ENCODE measurements at regions of chr10 and their contacts with region 1.

Region 1: DNA sequence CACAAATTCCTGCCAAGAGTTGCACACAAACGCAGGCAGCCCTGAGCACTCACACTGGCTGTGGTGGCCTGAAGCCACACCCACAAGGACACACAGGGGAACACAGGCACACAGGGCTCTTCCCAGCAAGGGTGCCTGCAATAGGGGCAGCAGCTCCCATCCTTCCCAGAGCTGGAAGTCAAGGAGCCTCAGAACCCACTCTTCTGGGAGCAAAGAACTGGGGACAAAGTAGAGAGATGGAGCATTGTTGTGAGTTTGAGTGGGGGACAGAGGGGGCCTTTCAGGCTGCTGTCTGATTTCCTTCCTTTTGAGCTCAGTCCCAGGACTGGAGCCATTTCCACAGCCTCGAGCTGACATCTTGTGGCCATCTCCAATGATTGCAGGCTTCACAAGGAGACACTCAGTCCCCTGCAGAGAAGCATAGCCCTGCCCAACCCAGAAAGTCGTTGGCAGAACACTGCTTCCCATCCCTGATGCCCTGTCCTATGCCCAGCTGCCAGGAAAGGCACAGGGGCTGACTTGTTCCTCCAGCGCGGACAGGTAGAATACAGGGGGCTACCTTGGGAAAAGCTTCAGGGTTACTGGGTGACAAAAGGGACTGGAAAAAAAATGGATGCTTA is 34.4 kb upstream of the SLF2 start:
- DNase-seq: no peak
- H3K4me3 ChIP-seq: no peak overlapping the region
- H3K27ac ChIP-seq: no peak overlapping the region
- H3K4me1 ChIP-seq: peaks cover 0 to 38% (median 14%) of the 10 kb centered on the region in 6 donors
- H3K27me3 ChIP-seq: peaks cover 0 to 30% (median 2%) of the 10 kb centered on the region in 7 donors
- CTCF ChIP-seq: peak; percentile 41 to 76 (median 58)
- POLR2A ChIP-seq: no peak

Region 2: GRCh38 chr10:99966306-99966705 is 912.1 kb before region 1 on chr10:
- intact Hi-C with region 1: no loop called
- DNase-seq: no peak
- H3K4me3 ChIP-seq: no peak overlapping the region
- H3K27ac ChIP-seq: peak overlapping the region in 1 of 8 donors; percentile 2
- H3K4me1 ChIP-seq: peaks cover 0 to 16% (median 4%) of the 10 kb centered on the region in 6 donors
- H3K27me3 ChIP-seq: no peaks in the 10 kb centered on the region
- CTCF ChIP-seq: no peak
- POLR2A ChIP-seq: no peak

Region 3: DNA sequence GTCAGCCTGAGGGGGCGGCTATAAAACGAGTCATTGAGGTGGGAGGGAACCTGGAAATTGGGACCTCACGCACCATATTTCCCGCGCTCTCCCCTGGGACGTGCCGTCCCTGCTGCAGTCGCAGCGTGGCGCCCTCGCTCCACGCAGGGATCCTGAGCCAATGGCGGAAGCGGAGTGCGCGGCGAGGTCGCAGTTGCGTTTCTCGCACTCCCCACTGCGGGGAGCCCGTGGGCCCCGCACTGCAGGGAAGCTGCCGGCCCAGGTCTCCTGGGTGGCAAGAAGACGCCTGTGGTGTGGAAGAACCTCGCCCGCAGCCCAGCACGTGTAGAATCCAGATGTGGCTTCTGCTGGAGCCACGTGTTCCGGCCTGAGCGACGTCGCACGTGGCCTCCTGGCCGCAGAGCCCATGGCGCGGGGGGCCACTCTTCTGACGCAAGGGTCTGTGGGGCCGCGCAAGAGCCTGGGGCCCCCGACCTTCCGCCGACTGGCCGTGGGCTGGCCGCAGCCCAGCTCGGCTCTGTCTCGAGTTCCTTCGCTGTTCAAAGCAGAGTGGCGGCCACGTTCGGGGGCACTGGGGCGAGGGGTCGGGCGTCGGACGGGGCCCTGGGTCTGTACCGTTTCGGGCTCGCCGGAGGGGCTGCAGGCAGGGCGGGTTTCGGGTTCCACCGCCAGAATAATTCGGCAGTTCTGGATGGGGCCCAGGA is 316.2 kb before region 1 on chr10:
- intact Hi-C with region 1: loop called (anchors 10 kb)
- DNase-seq: peak; percentile 90
- H3K4me3 ChIP-seq: peak overlapping the region in 4 of 8 donors; percentile 10 to 58 (median 22)
- H3K27ac ChIP-seq: no peak overlapping the region
- H3K4me1 ChIP-seq: peaks cover 0 to 21% (median 13%) of the 10 kb centered on the region in 6 donors
- H3K27me3 ChIP-seq: peaks cover 0 to 64% (median 23%) of the 10 kb centered on the region in 7 donors
- CTCF ChIP-seq: peak; percentile 48 to 91 (median 79)
- POLR2A ChIP-seq: no peak

Region 4: GRCh38 chr10:100670828-100671479 is 207.4 kb before region 1 on chr10:
- intact Hi-C with region 1: loop called (anchors 5 kb)
- DNase-seq: peak; percentile 89
- H3K4me3 ChIP-seq: peak overlapping the region in 2 of 8 donors; percentile 9 to 43
- H3K27ac ChIP-seq: no peak overlapping the region
- H3K4me1 ChIP-seq: peaks cover 3 to 10% (median 8%) of the 10 kb centered on the region in 6 donors
- H3K27me3 ChIP-seq: peaks cover 5 to 100% (median 67%) of the 10 kb centered on the region in 7 donors
- CTCF ChIP-seq: peak in 9 of 11 experiments; percentile 16 to 94 (median 86)
- POLR2A ChIP-seq: no peak

Region 5: DNA sequence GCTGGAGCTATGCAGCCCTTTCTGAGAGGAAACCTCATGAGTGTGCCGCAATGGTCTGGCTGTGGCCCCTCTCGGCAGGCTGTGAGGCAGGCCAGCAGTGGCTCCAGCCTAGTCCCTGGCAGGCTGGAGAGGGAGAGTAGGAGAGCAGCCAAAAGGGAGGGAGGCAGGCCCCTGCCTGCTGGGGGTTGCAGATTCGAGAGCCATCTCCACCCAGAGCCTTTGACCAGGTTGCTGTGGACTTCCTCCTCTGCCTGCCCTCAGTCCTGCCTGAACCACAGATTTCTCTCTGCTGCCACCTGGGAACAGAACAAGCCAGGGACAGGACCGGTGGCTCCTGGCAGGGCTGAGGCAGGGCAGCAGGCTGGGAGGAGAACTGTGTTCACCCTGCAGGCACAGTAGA is 119.1 kb before region 1 on chr10:
- intact Hi-C with region 1: no loop called
- DNase-seq: peak; percentile 47
- H3K4me3 ChIP-seq: no peak overlapping the region
- H3K27ac ChIP-seq: no peak overlapping the region
- H3K4me1 ChIP-seq: no peaks in the 10 kb centered on the region
- H3K27me3 ChIP-seq: peaks cover 0 to 92% (median 34%) of the 10 kb centered on the region in 7 donors
- CTCF ChIP-seq: no peak
- POLR2A ChIP-seq: no peak

Region 6: GRCh38 chr10:100998991-100999741 is 120.8 kb after region 1 on chr10:
- intact Hi-C with region 1: no loop called
- DNase-seq: peak; percentile 97
- H3K4me3 ChIP-seq: peak overlapping the region; percentile 64 to 91 (median 80)
- H3K27ac ChIP-seq: peak overlapping the region; percentile 93 to 99 (median 98)
- H3K4me1 ChIP-seq: peaks cover 17 to 79% (median 57%) of the 10 kb centered on the region in 6 donors
- H3K27me3 ChIP-seq: no peaks in the 10 kb centered on the region
- CTCF ChIP-seq: peak; percentile 90 to 99 (median 98)
- POLR2A ChIP-seq: peak in 1 of 3 donors; percentile 64

Measured in spleen (tissue), 13 donors.